ENCODE measurements at regions of chr5 and their contacts with region 1.

Region 1: GRCh38 chr5:157994906-157995519 is 136.1 kb upstream of the CLINT1 start:
- DNase-seq: peak; percentile 40 to 58
- H3K4me3 ChIP-seq: no peak overlapping the region
- H3K27ac ChIP-seq: no peak overlapping the region
- H3K4me1 ChIP-seq: no peaks in the 10 kb centered on the region
- H3K27me3 ChIP-seq: no peaks in the 10 kb centered on the region
- CTCF ChIP-seq: peak; percentile 69

Region 2: DNA sequence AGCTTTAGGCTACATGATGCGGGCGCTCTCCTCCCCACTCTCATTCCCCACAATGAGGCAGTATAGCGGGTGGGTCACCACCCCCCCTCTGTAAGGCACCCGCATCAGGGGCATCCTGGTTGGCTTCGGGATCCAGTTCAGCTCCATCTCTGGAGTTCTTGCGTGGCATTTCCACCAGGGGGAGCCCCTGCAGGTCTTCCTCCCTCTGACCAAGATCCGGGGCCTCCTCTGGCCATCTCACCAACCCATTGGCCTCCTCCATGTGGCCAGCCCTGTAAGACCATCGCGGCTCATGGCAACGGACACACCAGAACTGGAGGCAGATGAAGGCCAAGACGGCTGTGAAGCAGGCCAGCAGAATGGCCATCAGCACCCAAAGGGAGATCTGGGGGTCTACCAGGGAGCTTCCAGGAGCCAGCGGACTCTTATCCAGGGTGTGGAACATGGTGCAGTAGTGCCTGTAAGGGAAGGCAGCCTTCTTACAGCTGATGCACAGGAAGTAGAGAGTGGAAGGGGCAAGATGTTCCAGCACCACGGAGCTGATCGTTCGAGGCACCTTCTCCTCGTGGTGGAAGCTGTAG is 652.1 kb before region 1 on chr5:
- CTCF ChIA-PET with region 1: no interaction called
- POLR2A ChIA-PET with region 1: no interaction called
- intact Hi-C with region 1: loop called (anchors 10 kb)
- DNase-seq: peak in 1 of 2 experiments; percentile 49
- H3K4me3 ChIP-seq: no peak overlapping the region
- H3K27ac ChIP-seq: no peak overlapping the region
- H3K4me1 ChIP-seq: no peaks in the 10 kb centered on the region
- H3K27me3 ChIP-seq: peaks cover 22% of the 10 kb centered on the region; the same call in 1 of the 2 replicates
- CTCF ChIP-seq: peak; percentile 74

Region 3: GRCh38 chr5:157761690-157762621 is 233.1 kb before region 1 on chr5:
- CTCF ChIA-PET with region 1: interaction called, 4 read pairs
- POLR2A ChIA-PET with region 1: no interaction called
- intact Hi-C with region 1: loop called (anchors 1 kb)
- DNase-seq: peak in 1 of 2 experiments; percentile 30
- H3K4me3 ChIP-seq: no peak overlapping the region
- H3K27ac ChIP-seq: no peak overlapping the region
- H3K4me1 ChIP-seq: no peaks in the 10 kb centered on the region
- H3K27me3 ChIP-seq: no peaks in the 10 kb centered on the region
- CTCF ChIP-seq: peak; percentile 88

Region 4: DNA sequence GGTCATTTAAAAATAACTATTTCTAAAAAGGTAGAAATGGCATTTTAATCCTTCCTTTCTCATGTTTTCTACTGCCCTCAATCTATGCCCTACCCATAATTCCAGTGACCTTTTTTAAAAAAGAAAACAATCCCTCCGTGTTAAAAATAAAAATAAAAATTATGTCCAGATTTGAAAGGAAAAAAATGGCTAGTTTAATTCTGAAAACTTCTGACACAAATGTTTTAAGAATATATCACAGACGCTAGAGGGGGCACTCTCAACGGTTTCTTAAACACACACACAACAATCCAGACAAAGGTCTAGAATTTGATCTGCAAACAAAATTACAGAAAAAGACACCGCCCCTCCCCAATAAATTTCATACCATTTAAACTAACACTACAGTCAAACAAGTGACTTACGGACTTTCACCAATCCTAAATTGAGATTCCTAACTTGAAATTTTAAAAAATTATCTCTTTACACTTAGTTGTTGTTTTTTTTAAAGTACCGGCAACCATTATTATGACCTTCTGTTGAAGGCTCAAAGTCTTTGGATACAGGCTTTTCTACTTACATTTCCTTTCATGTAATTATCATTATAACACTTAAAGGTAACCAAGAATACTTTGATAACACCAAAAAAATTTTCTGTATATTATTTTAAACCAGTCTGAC is 174.3 kb before region 1 on chr5:
- CTCF ChIA-PET with region 1: no interaction called
- POLR2A ChIA-PET with region 1: no interaction called
- intact Hi-C with region 1: loop called (anchors 2 kb)
- DNase-seq: no peak
- H3K4me3 ChIP-seq: no peak overlapping the region
- H3K27ac ChIP-seq: no peak overlapping the region
- H3K4me1 ChIP-seq: no peaks in the 10 kb centered on the region
- H3K27me3 ChIP-seq: no peaks in the 10 kb centered on the region
- CTCF ChIP-seq: peak; percentile 61; the same call in 1 of the 2 replicates

Region 5: GRCh38 chr5:157858527-157859226 is 136.3 kb before region 1 on chr5 and contains the start of gene CLINT1:
- CTCF ChIA-PET with region 1: no interaction called
- POLR2A ChIA-PET with region 1: no interaction called
- intact Hi-C with region 1: loop called (anchors 1 kb)
- DNase-seq: peak; percentile 74 to 88
- H3K4me3 ChIP-seq: peak within 1 kb of the TSS; percentile 95
- H3K27ac ChIP-seq: peak within 1 kb of the TSS; percentile 64
- H3K4me1 ChIP-seq: peaks cover 17% of the 10 kb centered on the region
- H3K27me3 ChIP-seq: no peaks in the 10 kb centered on the region
- CTCF ChIP-seq: no peak
- total RNA-seq, gene CLINT1: 79.7 and 95.8 TPM in 2 replicates

Measured in PC-9 (cell line).